ENCODE measurements at regions of chr1 and their contacts with region 1.

Region 1: GRCh38 chr1:8419172-8419571 is 101.3 kb downstream of the SLC45A1 start:
- DNase-seq: no peak
- H3K4me3 ChIP-seq: peak overlapping the region; percentile 87 to 97 (median 96)
- H3K27ac ChIP-seq: peak overlapping the region; percentile 98 to 99
- H3K4me1 ChIP-seq: peaks cover 0 to 12% of the 10 kb centered on the region in 2 donors
- H3K27me3 ChIP-seq: no peaks in the 10 kb centered on the region
- CTCF ChIP-seq: no peak
- POLR2A ChIP-seq: no peak

Region 2: GRCh38 chr1:8465013-8465412 is 45.8 kb after region 1 on chr1:
- intact Hi-C with region 1: loop called (anchors 5 kb)
- DNase-seq: no peak
- H3K4me3 ChIP-seq: no peak overlapping the region
- H3K27ac ChIP-seq: peak overlapping the region; percentile 79
- H3K4me1 ChIP-seq: peaks cover 3 to 22% of the 10 kb centered on the region in 2 donors
- H3K27me3 ChIP-seq: no peaks in the 10 kb centered on the region
- CTCF ChIP-seq: no peak
- POLR2A ChIP-seq: no peak

Region 3: DNA sequence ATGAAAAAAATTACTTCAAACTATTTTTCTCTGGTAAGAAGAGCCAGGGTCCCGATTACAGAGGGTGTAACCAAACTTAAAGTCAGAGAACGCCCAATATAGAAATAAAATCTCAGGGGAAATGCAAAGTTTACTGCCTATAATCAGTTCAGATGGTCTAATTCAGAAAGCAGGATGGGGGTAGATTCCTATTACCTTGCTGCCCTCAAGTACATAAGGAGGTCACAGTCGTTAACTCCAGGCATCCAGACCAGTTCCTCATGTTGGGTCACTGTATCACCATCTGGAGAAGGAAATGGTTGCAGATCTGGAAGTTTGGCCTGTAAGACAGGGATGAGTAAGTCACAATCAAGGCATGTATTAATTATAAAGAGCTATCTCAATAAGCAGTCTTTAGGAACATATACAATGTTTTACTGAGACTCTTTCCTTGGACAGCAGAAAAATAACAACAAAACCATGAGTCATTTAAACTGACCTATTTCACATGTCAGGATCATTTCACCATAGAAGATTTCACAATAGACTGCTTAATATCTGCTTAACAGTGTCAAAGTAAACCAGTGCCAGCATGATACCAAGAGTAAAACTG is 78.1 kb after region 1 on chr1:
- intact Hi-C with region 1: no loop called
- DNase-seq: no peak
- H3K4me3 ChIP-seq: no peak overlapping the region
- H3K27ac ChIP-seq: peak overlapping the region; percentile 73 to 76
- H3K4me1 ChIP-seq: peaks cover 0 to 3% of the 10 kb centered on the region in 2 donors
- H3K27me3 ChIP-seq: no peaks in the 10 kb centered on the region
- CTCF ChIP-seq: no peak
- POLR2A ChIP-seq: no peak